Heart left ventricle (tissue), 16 donors: ENCODE measurements at regions of chr13 and their contacts with region 1.

Region 1: DNA sequence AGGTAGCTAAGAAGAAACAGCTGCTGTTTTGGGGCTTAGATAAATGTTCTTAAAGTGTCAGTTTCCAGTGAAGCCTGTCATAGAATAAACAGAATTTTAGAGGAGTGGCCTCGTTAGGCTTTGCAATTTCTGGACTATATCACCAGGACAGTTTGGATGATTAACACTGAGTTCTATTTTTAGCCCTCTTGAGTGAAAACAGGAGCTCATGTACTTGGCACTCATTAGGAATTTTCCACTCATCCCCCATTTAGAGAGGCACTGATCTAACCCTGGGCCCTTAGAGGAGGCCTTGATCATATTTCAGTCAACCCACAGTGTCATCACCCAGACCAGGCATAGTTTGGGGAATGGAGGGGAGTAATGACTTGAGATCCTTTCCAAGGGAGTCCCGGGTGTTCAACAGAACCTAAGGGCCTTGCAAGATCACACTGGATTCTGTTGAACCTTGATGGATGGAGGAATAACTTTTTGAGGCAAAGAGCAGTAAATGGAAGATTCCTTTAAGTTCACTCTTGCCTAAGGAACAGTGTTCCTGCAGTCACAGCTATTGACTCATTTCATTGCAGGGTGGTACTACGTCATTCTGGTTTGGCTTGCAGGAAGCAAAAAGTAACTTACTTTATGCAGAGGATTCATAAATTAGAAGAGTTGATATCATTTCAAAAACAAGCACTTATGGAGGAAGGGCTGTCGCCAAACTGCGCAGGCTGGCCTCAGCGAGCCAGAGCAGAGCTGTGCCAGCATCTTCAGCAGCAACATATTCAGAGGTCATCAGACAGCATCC is 160.2 kb downstream of the SLC7A1 start:
- DNase-seq: peak in 2 of 5 donors; percentile 40 to 47
- ATAC-seq: peak; percentile 87 to 93 (median 90)
- H3K4me3 ChIP-seq: peak overlapping the region in 1 of 12 donors; percentile 3
- H3K27ac ChIP-seq: peak overlapping the region; percentile 69 to 94 (median 88)
- H3K4me1 ChIP-seq: peaks cover 0 to 82% (median 26%) of the 10 kb centered on the region in 12 donors
- H3K27me3 ChIP-seq: peaks cover 0 to under 1% (median 0%) of the 10 kb centered on the region in 9 donors
- CTCF ChIP-seq: no peak
- POLR2A ChIP-seq: no peak

Region 2: GRCh38 chr13:28641605-28641937 is 793.7 kb before region 1 on chr13:
- intact Hi-C with region 1: no loop called
- DNase-seq: no peak
- ATAC-seq: no peak
- H3K4me3 ChIP-seq: no peak overlapping the region
- H3K27ac ChIP-seq: peak overlapping the region in 11 of 12 donors; percentile 26 to 79 (median 69)
- H3K4me1 ChIP-seq: peaks cover 0 to 35% (median 8%) of the 10 kb centered on the region in 12 donors
- H3K27me3 ChIP-seq: no peaks in the 10 kb centered on the region
- CTCF ChIP-seq: no peak
- POLR2A ChIP-seq: no peak

Region 3: GRCh38 chr13:28953714-28954418 is 481.5 kb before region 1 on chr13:
- intact Hi-C with region 1: loop called in 1 of 10 experiments (anchors 5 kb)
- DNase-seq: no peak
- ATAC-seq: no peak
- H3K4me3 ChIP-seq: no peak overlapping the region
- H3K27ac ChIP-seq: peak overlapping the region in 10 of 12 donors; percentile 15 to 89 (median 73)
- H3K4me1 ChIP-seq: peaks cover 0 to 25% (median 1%) of the 10 kb centered on the region in 12 donors
- H3K27me3 ChIP-seq: no peaks in the 10 kb centered on the region
- CTCF ChIP-seq: no peak
- POLR2A ChIP-seq: no peak

Region 4: GRCh38 chr13:29310806-29311205 is 124.5 kb before region 1 on chr13:
- intact Hi-C with region 1: no loop called
- DNase-seq: no peak
- ATAC-seq: no peak
- H3K4me3 ChIP-seq: no peak overlapping the region
- H3K27ac ChIP-seq: no peak overlapping the region
- H3K4me1 ChIP-seq: no peaks in the 10 kb centered on the region
- H3K27me3 ChIP-seq: no peaks in the 10 kb centered on the region
- CTCF ChIP-seq: no peak
- POLR2A ChIP-seq: no peak

Region 5: DNA sequence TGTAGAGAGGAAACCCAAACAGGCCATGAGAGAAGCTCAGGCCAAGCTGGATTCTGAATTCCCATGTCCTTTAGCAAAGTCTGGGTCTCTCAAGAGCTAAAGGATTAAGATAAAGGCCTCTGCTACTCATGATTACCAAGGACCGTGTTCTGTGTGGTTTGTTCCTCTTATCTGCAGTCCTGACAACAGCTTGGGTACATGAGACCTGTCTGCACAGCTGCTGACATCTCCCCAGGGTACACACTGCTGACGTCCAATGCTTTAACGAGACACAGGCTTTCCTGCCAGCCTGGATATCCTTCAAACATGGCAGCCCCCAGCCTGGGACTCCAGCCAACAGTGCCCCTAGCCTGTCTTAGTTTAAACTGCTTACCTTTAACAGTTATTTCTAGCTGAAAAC is 50.9 kb before region 1 on chr13:
- intact Hi-C with region 1: loop called in 1 of 10 experiments (anchors 10 kb)
- DNase-seq: peak in 2 of 5 donors; percentile 28 to 54
- ATAC-seq: peak; percentile 88 to 95 (median 94)
- H3K4me3 ChIP-seq: no peak overlapping the region
- H3K27ac ChIP-seq: peak overlapping the region in 3 of 12 donors; percentile 17 to 37 (median 25)
- H3K4me1 ChIP-seq: peaks cover 0 to 14% (median 0%) of the 10 kb centered on the region in 12 donors
- H3K27me3 ChIP-seq: no peaks in the 10 kb centered on the region
- CTCF ChIP-seq: no peak
- POLR2A ChIP-seq: no peak

Region 6: GRCh38 chr13:29484236-29484635 is 48.9 kb after region 1 on chr13:
- intact Hi-C with region 1: no loop called
- DNase-seq: no peak
- ATAC-seq: no peak
- H3K4me3 ChIP-seq: no peak overlapping the region
- H3K27ac ChIP-seq: no peak overlapping the region
- H3K4me1 ChIP-seq: peaks cover 0 to 38% (median 8%) of the 10 kb centered on the region in 12 donors
- H3K27me3 ChIP-seq: peaks cover 0 to 6% (median 0%) of the 10 kb centered on the region in 9 donors
- CTCF ChIP-seq: no peak
- POLR2A ChIP-seq: no peak